ENCODE measurements at regions of chr13 and their contacts with region 1.

Region 1: DNA sequence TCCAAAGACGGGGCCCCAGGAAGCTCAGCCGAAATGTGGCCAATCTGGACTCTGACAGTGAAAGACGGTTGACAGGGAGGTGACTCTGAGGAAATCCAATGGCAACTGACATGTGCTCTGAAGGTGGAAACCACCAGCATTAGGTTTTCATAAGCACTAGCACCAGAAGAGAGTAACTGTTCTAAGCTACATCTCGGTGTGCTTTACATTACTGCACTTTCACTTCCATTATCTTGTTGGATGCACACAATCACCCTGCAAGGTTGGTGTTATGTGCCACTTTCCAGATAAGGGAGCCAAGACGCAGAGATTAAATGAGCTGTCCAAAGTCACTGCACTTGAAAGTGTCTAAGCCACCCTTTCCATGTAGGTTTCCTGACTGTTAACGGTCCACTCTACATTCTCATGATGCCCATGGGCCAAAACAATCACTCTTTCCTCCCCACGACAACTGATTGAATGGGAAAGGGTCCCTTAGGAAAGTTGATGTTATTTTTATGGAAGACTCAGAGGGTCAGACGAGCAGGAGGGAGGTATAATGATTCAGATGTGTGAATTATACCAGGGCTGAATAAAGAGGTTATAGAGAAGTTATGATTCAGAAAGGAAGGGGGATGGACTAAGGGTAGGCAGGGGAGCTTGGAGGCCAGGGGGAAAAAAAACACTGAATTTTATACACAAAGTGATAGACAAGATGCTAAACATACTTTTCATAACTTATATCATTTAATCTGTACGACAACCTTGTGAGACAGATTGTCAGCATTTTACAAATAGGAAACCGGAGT is 52.8 kb downstream of the RUBCNL start:
- DNase-seq: no peak
- H3K4me3 ChIP-seq: no peak overlapping the region
- H3K4me3 Mint-ChIP-seq: peak overlapping the region in 2 of 7 donors; percentile 2 to 60
- H3K27ac ChIP-seq: no peak overlapping the region
- H3K27ac Mint-ChIP-seq: peak overlapping the region in 3 of 8 donors; percentile 27 to 44 (median 31)
- H3K4me1 ChIP-seq: peaks cover 9% of the 10 kb centered on the region
- H3K4me1 Mint-ChIP-seq: peaks cover 15 to 35% (median 32%) of the 10 kb centered on the region in 3 donors
- H3K27me3 ChIP-seq: no peaks in the 10 kb centered on the region
- H3K27me3 Mint-ChIP-seq: peaks cover 5 to 9% of the 10 kb centered on the region in 2 donors

Region 2: GRCh38 chr13:44884076-44884729 is 1450.0 kb before region 1 on chr13:
- CTCF ChIA-PET with region 1: no interaction called
- POLR2A ChIA-PET with region 1: interaction called, 10 read pairs
- DNase-seq: no peak
- H3K4me3 ChIP-seq: no peak overlapping the region
- H3K4me3 Mint-ChIP-seq: no peak overlapping the region
- H3K27ac ChIP-seq: no peak overlapping the region
- H3K27ac Mint-ChIP-seq: no peak overlapping the region
- H3K4me1 ChIP-seq: no peaks in the 10 kb centered on the region
- H3K4me1 Mint-ChIP-seq: no peaks in the 10 kb centered on the region
- H3K27me3 ChIP-seq: no peaks in the 10 kb centered on the region
- H3K27me3 Mint-ChIP-seq: peaks cover 3 to 6% of the 10 kb centered on the region in 2 donors

Region 3: DNA sequence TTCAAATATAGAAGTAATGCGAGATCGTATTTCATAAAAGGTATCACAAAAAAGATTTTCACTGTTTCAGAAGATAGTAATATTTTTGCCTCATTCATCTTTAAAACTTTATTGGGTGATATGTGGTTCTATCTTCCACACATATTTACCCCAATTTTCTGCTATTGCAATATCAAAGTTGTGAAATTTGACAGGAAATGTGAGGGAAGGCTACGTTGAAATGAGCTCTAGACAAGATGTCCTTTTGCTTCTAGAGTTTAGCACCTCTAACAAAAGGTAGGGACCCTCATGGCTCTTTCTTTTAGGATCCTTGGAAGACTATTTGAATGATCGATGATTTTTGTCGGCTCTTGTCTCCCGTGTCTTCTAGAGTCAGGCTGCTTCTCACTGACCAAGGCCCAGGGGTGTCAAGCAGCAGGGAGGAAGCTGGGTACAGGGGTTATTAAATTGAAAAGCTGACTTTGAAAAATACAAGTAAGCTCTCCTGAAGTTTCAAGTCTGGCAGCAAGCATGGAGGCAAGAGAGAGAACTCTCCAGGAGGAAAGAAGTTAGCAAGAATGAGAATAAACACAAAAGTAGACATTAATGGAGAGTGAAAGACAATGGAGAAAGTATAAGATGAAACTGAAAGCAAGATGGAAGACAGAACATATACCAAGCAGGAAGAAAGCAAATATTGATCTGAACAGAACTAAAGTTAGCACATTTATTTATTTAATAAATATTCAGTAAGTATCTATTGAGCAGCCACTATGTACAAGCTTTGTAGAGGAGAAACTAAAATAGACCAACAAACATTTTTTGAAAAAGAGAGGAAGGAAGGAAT is 20.6 kb before region 1 on chr13:
- CTCF ChIA-PET with region 1: interaction called, 6 read pairs
- POLR2A ChIA-PET with region 1: interaction called, 12 read pairs
- DNase-seq: peak in 1 of 5 donors; percentile 12
- H3K4me3 ChIP-seq: peak overlapping the region; percentile 33
- H3K4me3 Mint-ChIP-seq: peak overlapping the region; percentile 14 to 85 (median 74)
- H3K27ac ChIP-seq: peak overlapping the region; percentile 55
- H3K27ac Mint-ChIP-seq: peak overlapping the region; percentile 89 to 99 (median 97)
- H3K4me1 ChIP-seq: peaks cover 6% of the 10 kb centered on the region
- H3K4me1 Mint-ChIP-seq: peaks cover 21 to 26% (median 24%) of the 10 kb centered on the region in 3 donors
- H3K27me3 ChIP-seq: no peaks in the 10 kb centered on the region
- H3K27me3 Mint-ChIP-seq: peaks cover 0 to 1% of the 10 kb centered on the region in 2 donors

Measured in CD8-positive, alpha-beta memory T cell (primary cell).